T-cell (primary cell): ENCODE measurements at regions of chr1 and their contacts with region 1.

Region 1: GRCh38 chr1:98053471-98054366 is 132.9 kb upstream of the DPYD start:
- DNase-seq: peak in 28 of 35 experiments; percentile 13 to 70 (median 36)
- ATAC-seq: peak; percentile 87 to 94 (median 92)
- H3K4me3 ChIP-seq: peak overlapping the region; percentile 49 to 77
- H3K4me3 Mint-ChIP-seq: peak overlapping the region; percentile 60 to 72 (median 69)
- H3K27ac ChIP-seq: no peak overlapping the region
- H3K27ac Mint-ChIP-seq: no peak overlapping the region
- H3K4me1 ChIP-seq: peaks cover 3 to 22% of the 10 kb centered on the region in 2 experiments
- H3K4me1 Mint-ChIP-seq: peaks cover 23 to 28% (median 27%) of the 10 kb centered on the region in 3 donors
- H3K27me3 ChIP-seq: peaks cover 22 to 26% of the 10 kb centered on the region in 2 experiments
- H3K27me3 Mint-ChIP-seq: peaks cover 62 to 85% of the 10 kb centered on the region in 2 donors

Region 2: GRCh38 chr1:96962751-96963225 is 1090.9 kb before region 1 on chr1:
- CTCF ChIA-PET with region 1: interaction called, 12 to 15 read pairs
- POLR2A ChIA-PET with region 1: no interaction called
- DNase-seq: no peak
- ATAC-seq: no peak
- H3K4me3 ChIP-seq: no peak overlapping the region
- H3K4me3 Mint-ChIP-seq: no peak overlapping the region
- H3K27ac ChIP-seq: no peak overlapping the region
- H3K27ac Mint-ChIP-seq: no peak overlapping the region
- H3K4me1 ChIP-seq: no peaks in the 10 kb centered on the region
- H3K4me1 Mint-ChIP-seq: no peaks in the 10 kb centered on the region
- H3K27me3 ChIP-seq: no peaks in the 10 kb centered on the region
- H3K27me3 Mint-ChIP-seq: peaks cover 11 to 17% of the 10 kb centered on the region in 2 donors